MCF 10A (cell line): ENCODE measurements at regions of chr12 and their contacts with region 1.

Region 1: GRCh38 chr12:121443193-121443870 is 43.4 kb downstream of the RNF34 start:
- DNase-seq: peak; percentile 80
- H3K4me3 Mint-ChIP-seq: no peak overlapping the region
- H3K27ac Mint-ChIP-seq: no peak overlapping the region
- H3K4me1 Mint-ChIP-seq: no peaks in the 10 kb centered on the region
- H3K27me3 Mint-ChIP-seq: no peaks in the 10 kb centered on the region
- CTCF ChIP-seq: peak; percentile 84

Region 2: GRCh38 chr12:121279507-121279915 is 163.8 kb before region 1 on chr12:
- CTCF ChIA-PET with region 1: no interaction called
- POLR2A ChIA-PET with region 1: no interaction called
- intact Hi-C with region 1: loop called (anchors 1 kb)
- DNase-seq: no peak
- H3K4me3 Mint-ChIP-seq: no peak overlapping the region
- H3K27ac Mint-ChIP-seq: no peak overlapping the region
- H3K4me1 Mint-ChIP-seq: peaks cover 4% of the 10 kb centered on the region
- H3K27me3 Mint-ChIP-seq: no peaks in the 10 kb centered on the region
- CTCF ChIP-seq: no peak

Region 3: DNA sequence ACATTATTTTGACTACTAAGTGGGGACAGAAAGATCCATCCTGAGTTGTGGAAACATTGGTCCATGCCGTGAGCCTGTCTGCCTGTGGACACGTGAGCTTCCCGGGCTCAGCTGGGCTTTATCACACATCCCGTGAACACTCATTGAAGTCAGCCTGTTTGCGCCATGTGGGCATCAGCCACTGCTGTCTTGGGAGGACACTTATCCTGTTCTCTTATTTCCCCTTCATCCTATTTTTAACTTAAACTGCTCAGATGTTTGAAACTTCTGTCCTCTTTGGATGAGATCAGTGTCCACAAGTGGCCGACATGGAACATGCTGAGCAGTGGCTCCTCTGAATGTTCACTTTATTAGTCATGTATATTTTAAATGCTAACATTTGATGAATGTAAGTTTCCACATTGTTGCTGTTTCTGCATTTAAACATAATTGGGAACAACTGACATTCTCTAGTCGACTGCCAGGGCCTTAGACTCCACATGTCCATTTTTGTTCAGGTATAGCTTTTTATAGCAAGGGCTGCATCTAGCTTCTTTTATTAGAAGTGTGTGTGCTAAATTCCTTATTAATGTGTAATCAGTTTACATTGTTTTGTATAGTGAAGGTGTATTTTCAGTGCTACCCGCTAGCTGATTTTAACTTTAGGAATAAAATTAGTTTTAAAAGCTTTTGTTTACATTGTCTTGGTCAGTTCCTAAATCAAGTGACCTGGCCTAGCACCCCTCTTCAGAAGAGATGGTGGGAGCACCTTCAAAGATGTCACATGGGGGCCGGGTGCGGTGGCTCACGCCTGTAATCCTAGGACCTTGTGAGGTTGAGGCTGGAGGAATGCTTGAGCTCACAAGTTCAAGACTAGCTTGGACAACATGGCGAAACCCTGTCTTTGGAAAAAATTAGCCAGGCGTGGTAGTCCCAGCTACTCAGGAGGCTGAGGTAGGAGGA is 19.4 kb before region 1 on chr12:
- CTCF ChIA-PET with region 1: interaction called, 19 read pairs
- POLR2A ChIA-PET with region 1: interaction called, 4 read pairs
- intact Hi-C with region 1: no loop called
- DNase-seq: no peak
- H3K4me3 Mint-ChIP-seq: no peak overlapping the region
- H3K27ac Mint-ChIP-seq: no peak overlapping the region
- H3K4me1 Mint-ChIP-seq: no peaks in the 10 kb centered on the region
- H3K27me3 Mint-ChIP-seq: no peaks in the 10 kb centered on the region
- CTCF ChIP-seq: no peak

Region 4: GRCh38 chr12:121453629-121454028 is 10.3 kb after region 1 on chr12:
- CTCF ChIA-PET with region 1: interaction called, 19 read pairs
- POLR2A ChIA-PET with region 1: interaction called, 3 read pairs
- intact Hi-C with region 1: no loop called
- DNase-seq: no peak
- H3K4me3 Mint-ChIP-seq: no peak overlapping the region
- H3K27ac Mint-ChIP-seq: no peak overlapping the region
- H3K4me1 Mint-ChIP-seq: peaks cover 4% of the 10 kb centered on the region
- H3K27me3 Mint-ChIP-seq: no peaks in the 10 kb centered on the region
- CTCF ChIP-seq: no peak